ENCODE measurements at regions of chr6 and their contacts with region 1.

Region 1: DNA sequence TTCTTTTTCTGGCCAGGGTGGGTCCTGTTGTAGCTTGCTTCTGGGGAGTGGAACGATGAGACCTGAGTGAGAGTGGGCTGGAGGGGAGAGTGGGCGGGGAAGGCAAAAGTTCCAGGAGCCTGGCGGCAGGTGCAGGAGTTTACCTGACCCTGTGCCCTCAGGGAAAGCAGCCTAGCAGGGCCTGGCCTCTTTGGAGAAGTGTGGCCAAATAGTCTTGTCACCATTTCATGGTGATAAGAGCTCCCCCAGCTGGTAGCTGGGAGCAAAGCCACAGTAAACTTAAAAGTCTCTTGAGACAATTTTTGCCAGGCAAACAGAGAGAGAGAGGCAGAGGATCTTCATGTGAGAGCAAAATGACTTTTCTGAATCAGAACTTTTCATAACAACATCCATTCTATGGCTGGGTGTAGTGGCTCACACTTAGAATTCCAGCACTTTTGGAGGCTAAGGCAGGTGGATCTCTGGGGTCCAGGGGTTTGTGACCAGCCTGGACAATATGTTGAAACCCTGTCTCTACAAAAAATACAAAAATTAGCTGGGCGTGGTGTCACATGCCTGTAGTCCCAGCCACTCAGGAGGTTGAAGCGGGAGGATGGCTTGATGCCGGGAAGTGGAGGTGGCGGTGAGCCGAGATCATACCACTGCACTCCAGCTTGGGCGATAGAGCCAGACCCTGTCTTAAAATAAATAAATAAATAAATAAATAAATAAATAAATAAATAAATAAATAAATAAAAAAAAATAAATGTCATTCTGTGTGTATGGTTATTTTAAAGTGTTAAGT is 161.8 kb upstream of the SCGN start:
- DNase-seq: peak; percentile 37 to 81 (median 65)
- ATAC-seq: peak; percentile 71
- H3K4me3 ChIP-seq: no peak overlapping the region
- H3K4me3 Mint-ChIP-seq: no peak overlapping the region
- H3K27ac ChIP-seq: no peak overlapping the region
- H3K27ac Mint-ChIP-seq: no peak overlapping the region
- H3K4me1 ChIP-seq: peaks cover 5% of the 10 kb centered on the region
- H3K4me1 Mint-ChIP-seq: peaks cover 7% of the 10 kb centered on the region
- H3K27me3 ChIP-seq: no peaks in the 10 kb centered on the region
- H3K27me3 Mint-ChIP-seq: no peaks in the 10 kb centered on the region
- CTCF ChIP-seq: peak; percentile 91

Region 2: DNA sequence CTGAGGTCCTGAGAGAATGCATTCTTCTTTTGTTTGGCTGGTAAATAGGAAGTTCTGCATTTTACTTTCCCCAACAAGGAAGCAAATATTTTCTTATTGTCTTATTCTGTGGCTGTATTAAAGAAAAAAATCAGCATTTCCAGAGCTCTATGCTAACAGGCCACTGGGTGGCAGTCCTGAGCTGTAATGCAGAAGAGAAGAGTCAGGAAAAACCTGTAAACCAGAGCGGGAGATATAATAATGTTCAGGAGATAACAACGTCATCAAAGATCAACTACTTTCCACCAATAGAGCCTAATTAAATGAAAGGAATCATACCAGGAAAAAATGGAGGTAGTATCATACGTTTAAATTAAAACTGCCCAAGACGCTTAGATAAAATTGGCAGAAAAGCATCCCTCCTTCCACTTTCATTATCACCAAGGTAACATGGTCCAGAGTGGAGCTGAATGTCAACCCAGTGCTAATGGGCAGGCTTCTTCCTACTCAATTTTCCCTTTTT is 266.7 kb before region 1 on chr6:
- CTCF ChIA-PET with region 1: interaction called, 21 read pairs
- POLR2A ChIA-PET with region 1: interaction called, 3 read pairs
- intact Hi-C with region 1: loop called (anchors 1 kb)
- DNase-seq: peak; percentile 19 to 79 (median 66)
- ATAC-seq: peak; percentile 61
- H3K4me3 ChIP-seq: peak overlapping the region in 1 of 2 experiments; percentile 23
- H3K4me3 Mint-ChIP-seq: peak overlapping the region; percentile 72
- H3K27ac ChIP-seq: no peak overlapping the region
- H3K27ac Mint-ChIP-seq: no peak overlapping the region
- H3K4me1 ChIP-seq: peaks cover 6% of the 10 kb centered on the region
- H3K4me1 Mint-ChIP-seq: peaks cover 10% of the 10 kb centered on the region
- H3K27me3 ChIP-seq: no peaks in the 10 kb centered on the region
- H3K27me3 Mint-ChIP-seq: peaks cover 7% of the 10 kb centered on the region
- CTCF ChIP-seq: peak; percentile 96

Region 3: GRCh38 chr6:25270559-25270958 is 219.7 kb before region 1 on chr6:
- CTCF ChIA-PET with region 1: interaction called, 161 read pairs
- POLR2A ChIA-PET with region 1: interaction called, 5 read pairs
- intact Hi-C with region 1: loop called (anchors 1 kb)
- DNase-seq: no peak
- ATAC-seq: no peak
- H3K4me3 ChIP-seq: no peak overlapping the region
- H3K4me3 Mint-ChIP-seq: no peak overlapping the region
- H3K27ac ChIP-seq: no peak overlapping the region
- H3K27ac Mint-ChIP-seq: no peak overlapping the region
- H3K4me1 ChIP-seq: no peaks in the 10 kb centered on the region
- H3K4me1 Mint-ChIP-seq: peaks cover under 1% of the 10 kb centered on the region
- H3K27me3 ChIP-seq: peaks cover 0 to 3% of the 10 kb centered on the region in 2 experiments
- H3K27me3 Mint-ChIP-seq: peaks cover 18% of the 10 kb centered on the region
- CTCF ChIP-seq: no peak

Region 4: DNA sequence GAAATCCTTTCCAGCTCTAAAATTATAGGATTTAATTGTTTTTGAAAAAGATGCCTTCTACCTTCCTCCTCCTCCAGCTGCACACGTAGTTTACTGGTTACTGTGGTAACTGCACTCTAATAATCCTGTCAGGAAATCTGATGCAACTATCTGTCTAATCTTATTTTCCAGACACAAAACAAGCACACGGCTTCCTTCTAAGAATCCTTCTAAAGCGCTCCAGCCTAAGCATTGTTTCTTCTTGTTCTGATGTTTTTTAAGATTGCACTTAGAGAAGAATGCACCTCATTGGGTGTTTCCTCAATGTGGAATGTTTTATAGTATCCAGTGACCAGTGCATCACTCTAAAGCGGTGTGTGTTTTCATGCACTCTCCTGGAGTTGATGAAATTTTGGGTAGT is 147.4 kb before region 1 on chr6:
- CTCF ChIA-PET with region 1: interaction called, 11 read pairs
- POLR2A ChIA-PET with region 1: no interaction called
- intact Hi-C with region 1: loop called in 1 of 2 experiments (anchors 1 kb)
- DNase-seq: no peak
- ATAC-seq: no peak
- H3K4me3 ChIP-seq: no peak overlapping the region
- H3K4me3 Mint-ChIP-seq: no peak overlapping the region
- H3K27ac ChIP-seq: no peak overlapping the region
- H3K27ac Mint-ChIP-seq: no peak overlapping the region
- H3K4me1 ChIP-seq: no peaks in the 10 kb centered on the region
- H3K4me1 Mint-ChIP-seq: peaks cover 18% of the 10 kb centered on the region
- H3K27me3 ChIP-seq: no peaks in the 10 kb centered on the region
- H3K27me3 Mint-ChIP-seq: no peaks in the 10 kb centered on the region
- CTCF ChIP-seq: no peak

Region 5: DNA sequence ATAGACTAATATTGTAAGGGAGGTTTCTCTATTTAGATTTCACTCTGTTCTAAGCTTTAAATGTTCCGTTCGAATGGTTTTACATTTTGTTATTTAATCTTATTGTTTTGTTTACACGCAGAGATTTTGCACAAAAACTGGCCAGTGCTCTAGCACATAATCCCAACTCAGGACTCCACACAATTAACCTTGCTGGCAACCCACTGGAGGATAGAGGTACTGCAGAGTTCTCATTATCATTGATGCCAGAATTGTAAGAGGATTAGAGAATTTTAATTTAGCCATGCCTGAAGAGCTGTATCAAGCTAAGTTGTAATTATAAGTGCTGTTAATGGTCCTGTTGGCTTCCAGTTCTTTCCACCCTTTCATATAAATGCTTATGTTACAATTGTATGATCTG is 17.9 kb before region 1 on chr6:
- CTCF ChIA-PET with region 1: interaction called, 10 read pairs
- POLR2A ChIA-PET with region 1: no interaction called
- intact Hi-C with region 1: no loop called
- DNase-seq: no peak
- ATAC-seq: no peak
- H3K4me3 ChIP-seq: no peak overlapping the region
- H3K4me3 Mint-ChIP-seq: no peak overlapping the region
- H3K27ac ChIP-seq: no peak overlapping the region
- H3K27ac Mint-ChIP-seq: no peak overlapping the region
- H3K4me1 ChIP-seq: no peaks in the 10 kb centered on the region
- H3K4me1 Mint-ChIP-seq: no peaks in the 10 kb centered on the region
- H3K27me3 ChIP-seq: no peaks in the 10 kb centered on the region
- H3K27me3 Mint-ChIP-seq: no peaks in the 10 kb centered on the region
- CTCF ChIP-seq: peak; percentile 43

Region 6: GRCh38 chr6:25556516-25556915 is 66.3 kb after region 1 on chr6:
- CTCF ChIA-PET with region 1: interaction called, 21 read pairs
- POLR2A ChIA-PET with region 1: no interaction called
- intact Hi-C with region 1: loop called in 1 of 2 experiments (anchors 2 kb)
- DNase-seq: peak; percentile 61 to 83 (median 76)
- ATAC-seq: peak; percentile 54
- H3K4me3 ChIP-seq: no peak overlapping the region
- H3K4me3 Mint-ChIP-seq: no peak overlapping the region
- H3K27ac ChIP-seq: no peak overlapping the region
- H3K27ac Mint-ChIP-seq: no peak overlapping the region
- H3K4me1 ChIP-seq: no peaks in the 10 kb centered on the region
- H3K4me1 Mint-ChIP-seq: peaks cover 2% of the 10 kb centered on the region
- H3K27me3 ChIP-seq: no peaks in the 10 kb centered on the region
- H3K27me3 Mint-ChIP-seq: no peaks in the 10 kb centered on the region
- CTCF ChIP-seq: peak; percentile 93

Region 7: GRCh38 chr6:25617997-25618396 is 127.8 kb after region 1 on chr6:
- CTCF ChIA-PET with region 1: no interaction called
- POLR2A ChIA-PET with region 1: no interaction called
- intact Hi-C with region 1: loop called in 1 of 2 experiments (anchors 10 kb)
- DNase-seq: no peak
- ATAC-seq: no peak
- H3K4me3 ChIP-seq: no peak overlapping the region
- H3K4me3 Mint-ChIP-seq: no peak overlapping the region
- H3K27ac ChIP-seq: no peak overlapping the region
- H3K27ac Mint-ChIP-seq: no peak overlapping the region
- H3K4me1 ChIP-seq: no peaks in the 10 kb centered on the region
- H3K4me1 Mint-ChIP-seq: no peaks in the 10 kb centered on the region
- H3K27me3 ChIP-seq: no peaks in the 10 kb centered on the region
- H3K27me3 Mint-ChIP-seq: no peaks in the 10 kb centered on the region
- CTCF ChIP-seq: no peak

Measured in CD8-positive, alpha-beta T cell (primary cell).